A549 (cell line): ENCODE measurements at regions of chr22 and their contacts with region 1.

Region 1: DNA sequence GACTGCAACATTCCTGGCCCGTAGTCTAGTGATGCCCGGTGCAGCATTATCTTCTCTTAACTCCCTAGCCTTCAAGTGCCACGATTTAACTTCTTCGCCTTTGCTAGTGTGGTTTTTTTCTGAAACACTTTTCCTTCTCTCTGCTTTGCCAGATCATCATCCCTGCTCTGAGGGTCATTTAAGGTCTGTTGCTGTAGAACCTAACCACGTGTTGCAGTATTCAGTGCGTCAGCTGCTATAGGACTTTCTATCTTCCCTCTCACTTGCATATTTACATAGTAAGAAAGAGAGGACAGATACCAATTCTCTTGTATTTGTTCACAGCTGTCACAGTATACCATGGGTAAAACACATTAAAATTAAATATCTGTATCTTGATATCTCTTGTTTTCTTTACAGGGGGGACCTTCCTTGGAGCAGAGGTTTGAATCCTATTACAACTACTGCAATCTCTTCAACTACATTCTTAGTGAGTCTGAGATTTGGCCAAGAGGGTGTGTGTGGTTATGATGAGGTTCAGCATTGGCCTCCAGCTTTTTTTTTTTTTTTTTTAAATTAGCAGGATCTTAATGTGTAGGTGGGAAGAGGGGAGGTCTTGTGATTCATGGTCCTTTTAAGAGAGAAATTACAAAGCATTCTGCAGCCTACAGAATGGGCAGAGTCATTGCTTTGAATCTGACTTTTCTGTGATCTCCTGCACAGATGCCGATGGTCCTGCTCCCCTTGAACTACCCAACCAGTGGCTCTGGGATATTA is 13.5 kb downstream of the EIF3L start:
- DNase-seq: no peak
- ATAC-seq: peak; percentile 23 to 24; a peak in 3 of 6 replicates
- H3K4me3 ChIP-seq: no peak overlapping the region
- H3K27ac ChIP-seq: no peak overlapping the region
- H3K4me1 ChIP-seq: no peaks in the 10 kb centered on the region
- CTCF ChIP-seq: no peak
- EP300 ChIP-seq: no peak
- POLR2A ChIP-seq: no peak
- RAD21 ChIP-seq: no peak

Region 2: DNA sequence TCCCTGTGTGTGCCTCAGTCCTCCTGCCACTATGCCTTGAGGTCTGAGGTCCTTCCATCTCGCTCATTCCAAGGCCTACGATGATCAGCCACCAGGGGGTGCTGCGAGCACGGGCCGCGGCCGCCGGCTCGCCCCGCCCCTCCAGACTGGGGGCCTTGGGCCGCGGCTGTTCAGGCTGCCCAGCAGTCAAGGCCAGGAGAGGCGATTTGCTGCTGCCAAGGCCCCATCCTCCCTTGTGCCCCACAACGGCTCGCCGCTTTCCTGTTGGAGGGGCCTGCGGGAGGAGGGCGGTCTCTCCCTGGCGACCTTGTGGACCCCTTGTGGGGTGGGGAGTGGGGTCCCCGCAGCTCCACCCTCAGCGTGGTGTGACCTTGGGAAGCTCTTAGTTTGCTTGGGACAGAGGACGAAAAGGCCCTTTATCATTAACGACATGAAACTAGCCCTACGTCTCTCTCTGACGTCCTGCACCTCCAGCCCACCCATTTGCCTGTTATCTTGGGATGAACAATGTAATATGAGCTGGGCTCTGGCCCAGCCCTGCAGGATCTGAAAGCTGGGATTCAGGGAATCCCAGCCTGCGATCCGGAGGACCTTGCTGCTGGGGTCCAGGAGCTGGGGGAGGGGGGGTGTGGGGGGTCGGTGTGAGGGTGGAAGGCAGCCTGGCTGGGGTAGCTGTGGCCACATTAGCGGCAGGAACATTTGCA is 44.9 kb before region 1 on chr22:
- CTCF ChIA-PET with region 1: interaction called, 112 read pairs
- POLR2A ChIA-PET with region 1: no interaction called
- DNase-seq: peak; percentile 68 to 69
- ATAC-seq: peak; percentile 77 to 94
- H3K4me3 ChIP-seq: 0 out of 3 replicates have a peak overlapping the region, but pooled peaks have one; percentile 29
- H3K27ac ChIP-seq: peak overlapping the region; percentile 71 to 88
- H3K4me1 ChIP-seq: peaks cover 4% of the 10 kb centered on the region; the same call in 1 of the 3 replicates
- CTCF ChIP-seq: peak; percentile 85
- EP300 ChIP-seq: no peak
- POLR2A ChIP-seq: no peak
- RAD21 ChIP-seq: peak; percentile 76 to 85

Region 3: GRCh38 chr22:37832022-37832857 is 30.5 kb before region 1 on chr22:
- CTCF ChIA-PET with region 1: interaction called, 18 read pairs
- POLR2A ChIA-PET with region 1: no interaction called
- DNase-seq: no peak
- ATAC-seq: 0 out of 6 replicates have a peak, but pooled peaks of 1 of the 2 experiments have one; percentile 21
- H3K4me3 ChIP-seq: no peak overlapping the region
- H3K27ac ChIP-seq: no peak overlapping the region
- H3K4me1 ChIP-seq: no peaks in the 10 kb centered on the region
- CTCF ChIP-seq: no peak
- EP300 ChIP-seq: no peak
- POLR2A ChIP-seq: no peak
- RAD21 ChIP-seq: no peak

Region 4: DNA sequence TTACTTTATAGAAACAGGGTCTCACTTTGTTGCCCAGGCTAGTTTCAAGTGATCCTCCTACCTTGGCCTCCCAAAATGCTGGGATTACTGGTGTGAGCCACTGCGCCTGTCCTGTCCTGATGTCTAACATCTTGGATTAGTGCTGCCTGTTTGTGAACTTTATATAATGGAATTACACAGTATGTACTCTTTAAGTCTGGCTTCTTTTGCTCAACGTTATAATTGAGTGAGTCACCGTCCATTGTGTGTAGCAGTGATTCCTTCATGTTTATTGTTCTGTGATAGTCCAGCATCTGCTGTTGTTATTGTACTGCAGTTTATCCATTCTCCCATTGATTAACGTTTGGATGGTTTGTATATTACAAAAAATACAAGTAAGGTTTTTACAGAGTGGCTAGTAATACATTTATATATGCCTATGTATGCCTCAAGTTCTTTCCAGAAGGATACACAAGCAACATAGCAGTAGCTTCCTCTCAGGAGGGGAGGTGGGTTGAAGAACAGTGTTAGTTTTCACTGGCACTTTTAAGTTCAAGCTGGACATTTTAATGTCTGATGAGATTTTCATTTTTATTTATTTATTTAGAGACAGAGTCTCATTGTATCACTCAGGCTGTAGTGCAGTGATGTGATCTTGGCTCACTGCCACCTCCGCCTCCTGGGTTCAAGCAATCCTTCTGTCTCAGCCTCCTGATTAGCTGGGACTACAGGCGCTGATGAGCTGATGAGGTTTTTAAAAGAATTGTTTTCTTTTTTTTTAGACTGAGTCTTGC is 18.1 kb after region 1 on chr22:
- CTCF ChIA-PET with region 1: interaction called, 36 read pairs
- POLR2A ChIA-PET with region 1: no interaction called
- DNase-seq: no peak
- ATAC-seq: no peak
- H3K4me3 ChIP-seq: no peak overlapping the region
- H3K27ac ChIP-seq: no peak overlapping the region
- H3K4me1 ChIP-seq: no peaks in the 10 kb centered on the region
- CTCF ChIP-seq: no peak
- EP300 ChIP-seq: no peak
- POLR2A ChIP-seq: no peak
- RAD21 ChIP-seq: no peak

Region 5: DNA sequence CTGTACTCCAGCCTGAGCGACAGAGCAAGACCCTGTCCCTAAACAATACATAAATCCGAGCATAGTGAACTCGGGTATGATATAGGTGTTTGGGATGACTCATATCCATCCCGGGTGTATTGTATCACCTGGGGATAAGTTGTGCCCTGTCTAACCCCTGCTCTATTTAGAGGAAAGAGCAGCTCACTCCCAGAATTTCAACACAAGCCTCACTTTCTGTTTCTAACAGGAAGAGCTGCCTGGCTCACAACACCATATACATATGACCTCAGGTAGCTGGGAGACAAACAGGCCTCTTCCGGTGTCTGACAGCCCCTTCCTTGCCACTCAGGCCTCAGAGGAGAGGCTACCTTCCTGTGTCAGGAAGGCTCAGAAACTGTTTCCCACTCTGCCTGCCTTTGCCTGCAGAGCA is 33.4 kb after region 1 on chr22:
- CTCF ChIA-PET with region 1: interaction called, 23 read pairs
- POLR2A ChIA-PET with region 1: interaction called, 4 read pairs
- DNase-seq: no peak
- ATAC-seq: peak in 1 of 2 experiments; percentile 11; a peak in 1 of 6 replicates
- H3K4me3 ChIP-seq: no peak overlapping the region
- H3K27ac ChIP-seq: peak overlapping the region; percentile 30 to 71; a peak in 3 of 6 replicates
- H3K4me1 ChIP-seq: peaks cover 43% of the 10 kb centered on the region
- CTCF ChIP-seq: no peak
- EP300 ChIP-seq: no peak
- POLR2A ChIP-seq: no peak
- RAD21 ChIP-seq: no peak